GM12878 (cell line): ENCODE measurements at regions of chr3 and their contacts with region 1.

Region 1: DNA sequence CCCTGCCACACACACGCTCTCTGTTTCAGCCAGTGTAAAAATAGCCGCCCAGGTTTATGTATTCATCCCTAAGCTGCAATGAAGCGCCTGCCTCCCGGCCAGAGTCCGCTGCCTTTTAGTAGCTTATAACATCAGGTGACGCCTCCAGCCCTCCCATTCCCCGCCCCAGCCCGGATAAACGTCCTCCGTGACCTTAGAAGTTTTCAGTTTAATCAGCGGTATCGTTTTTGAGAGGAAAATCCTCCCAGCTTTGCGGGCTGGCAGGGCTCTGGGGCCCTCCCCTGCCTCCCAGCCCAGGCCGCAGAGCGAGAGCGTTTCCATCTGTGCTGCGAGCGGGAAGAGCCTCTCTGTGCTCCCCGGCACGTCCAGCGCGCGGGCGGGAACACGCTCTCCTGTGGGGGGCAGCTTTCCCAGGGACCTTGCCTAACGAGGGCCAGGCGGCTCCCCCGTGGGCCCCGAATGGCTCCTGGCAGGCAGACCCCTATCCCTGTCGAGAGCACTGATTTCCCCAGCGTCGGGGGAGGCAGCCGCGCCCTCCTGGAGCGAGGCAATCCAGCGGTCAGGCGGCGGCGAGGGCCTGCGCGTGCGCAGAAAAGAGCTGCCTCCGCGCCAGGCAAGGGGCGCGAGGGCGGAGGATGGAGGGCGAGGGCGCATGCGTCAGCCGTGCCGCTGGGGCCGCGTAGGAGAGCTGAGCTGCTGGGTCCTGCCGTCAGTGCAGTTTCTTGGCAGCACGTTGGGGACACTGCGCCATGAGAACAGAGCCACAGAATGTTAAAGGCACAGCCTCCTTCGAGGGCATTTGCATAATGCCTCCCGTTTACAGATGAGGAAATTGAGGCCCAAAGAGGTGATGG is 71.1 kb downstream of the CCNL1 start:
- DNase-seq: peak; percentile 93
- ATAC-seq: peak; percentile 91
- H3K4me3 ChIP-seq: peak overlapping the region; percentile 52
- H3K27ac ChIP-seq: peak overlapping the region; percentile 97
- H3K4me1 ChIP-seq: peaks cover 53% of the 10 kb centered on the region
- H3K27me3 ChIP-seq: no peaks in the 10 kb centered on the region
- CTCF ChIP-seq: peak in 1 of 3 experiments; percentile 2; a peak in 1 of 6 replicates
- EP300 ChIP-seq: peak; percentile 41 to 58
- POLR2A ChIP-seq: peak; percentile 91
- RAD21 ChIP-seq: no peak

Region 2: GRCh38 chr3:156547637-156548036 is 541.2 kb before region 1 on chr3:
- CTCF ChIA-PET with region 1: interaction called, 3 read pairs
- POLR2A ChIA-PET with region 1: interaction called, 5 read pairs
- RAD21 ChIA-PET with region 1: no interaction called
- SMC1A ChIA-PET with region 1: interaction called, 12 read pairs
- in situ Hi-C with region 1: loop called (anchors 5 kb)
- intact Hi-C with region 1: loop called (anchors 5 kb)
- DNase-seq: no peak
- ATAC-seq: no peak
- H3K4me3 ChIP-seq: no peak overlapping the region
- H3K27ac ChIP-seq: no peak overlapping the region
- H3K4me1 ChIP-seq: no peaks in the 10 kb centered on the region; the same call in 1 of the 2 replicates
- H3K27me3 ChIP-seq: no peaks in the 10 kb centered on the region
- CTCF ChIP-seq: no peak
- EP300 ChIP-seq: no peak
- POLR2A ChIP-seq: no peak
- RAD21 ChIP-seq: no peak

Region 3: GRCh38 chr3:156674046-156674910 is 414.6 kb before region 1 on chr3 and contains the start of gene TIPARP:
- CTCF ChIA-PET with region 1: interaction called, 199 read pairs
- POLR2A ChIA-PET with region 1: interaction called, 6 read pairs
- RAD21 ChIA-PET with region 1: interaction called, 29 read pairs
- SMC1A ChIA-PET with region 1: interaction called, 142 read pairs
- in situ Hi-C with region 1: loop called (anchors 5 kb)
- intact Hi-C with region 1: loop called (anchors 2 kb)
- DNase-seq: peak; percentile 99
- ATAC-seq: peak; percentile 84
- H3K4me3 ChIP-seq: peak within 1 kb of the TSS; percentile 98
- H3K27ac ChIP-seq: peak within 1 kb of the TSS; percentile 73
- H3K4me1 ChIP-seq: no peaks in the 10 kb centered on the region
- H3K27me3 ChIP-seq: no peaks in the 10 kb centered on the region
- CTCF ChIP-seq: peak; percentile 63 to 90 (median 86)
- EP300 ChIP-seq: peak; percentile 65 to 71
- POLR2A ChIP-seq: peak; percentile 100
- RAD21 ChIP-seq: peak; percentile 81
- polyA plus RNA-seq, gene TIPARP: 3.2 to 3.3 TPM

Region 4: GRCh38 chr3:156978481-156978961 is 110.3 kb before region 1 on chr3:
- CTCF ChIA-PET with region 1: no interaction called
- POLR2A ChIA-PET with region 1: interaction called, 9 read pairs
- RAD21 ChIA-PET with region 1: interaction called, 6 read pairs
- SMC1A ChIA-PET with region 1: interaction called, 11 read pairs
- in situ Hi-C with region 1: no loop called
- intact Hi-C with region 1: no loop called
- DNase-seq: peak; percentile 83
- ATAC-seq: peak; percentile 98
- H3K4me3 ChIP-seq: no peak overlapping the region
- H3K27ac ChIP-seq: peak overlapping the region; percentile 93
- H3K4me1 ChIP-seq: peaks cover 20% of the 10 kb centered on the region
- H3K27me3 ChIP-seq: no peaks in the 10 kb centered on the region
- CTCF ChIP-seq: no peak
- EP300 ChIP-seq: peak; percentile 65 to 87
- POLR2A ChIP-seq: no peak
- RAD21 ChIP-seq: 0 out of 2 replicates have a peak, but pooled peaks have one; percentile 11

Region 5: DNA sequence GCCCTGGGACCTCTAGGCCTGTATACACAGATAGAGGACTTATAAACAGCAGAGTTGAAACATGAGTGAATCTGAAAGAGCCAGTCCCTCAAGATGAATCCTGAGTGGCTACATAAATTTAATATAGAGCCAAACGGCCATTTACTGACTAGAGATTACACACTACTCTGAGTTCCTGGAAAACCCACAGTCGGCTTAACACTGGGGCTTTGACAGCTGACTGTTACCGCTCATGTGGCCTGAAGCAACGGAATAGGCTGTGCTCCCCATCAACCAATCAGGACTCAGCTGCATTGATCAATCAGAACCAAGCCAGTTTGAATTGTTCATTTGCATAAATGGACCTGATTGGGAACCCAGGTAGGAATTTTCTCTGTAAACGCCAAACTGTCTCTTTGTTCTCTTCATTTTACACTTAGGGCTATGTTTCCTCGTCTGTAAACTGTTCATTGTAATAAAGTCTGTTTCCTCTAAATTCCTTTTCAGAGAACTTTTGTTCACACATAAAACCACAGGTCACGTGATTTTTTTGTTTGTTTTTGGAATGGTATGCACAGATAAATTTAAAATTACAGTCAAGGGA is 30.6 kb after region 1 on chr3:
- CTCF ChIA-PET with region 1: interaction called, 939 read pairs
- POLR2A ChIA-PET with region 1: interaction called, 3 read pairs
- RAD21 ChIA-PET with region 1: interaction called, 153 read pairs
- SMC1A ChIA-PET with region 1: interaction called, 13 read pairs
- in situ Hi-C with region 1: no loop called
- intact Hi-C with region 1: no loop called
- DNase-seq: no peak
- ATAC-seq: no peak
- H3K4me3 ChIP-seq: no peak overlapping the region
- H3K27ac ChIP-seq: no peak overlapping the region
- H3K4me1 ChIP-seq: no peaks in the 10 kb centered on the region
- H3K27me3 ChIP-seq: no peaks in the 10 kb centered on the region
- CTCF ChIP-seq: no peak
- EP300 ChIP-seq: no peak
- POLR2A ChIP-seq: no peak
- RAD21 ChIP-seq: no peak

Region 6: GRCh38 chr3:157159762-157160657 is 71.2 kb after region 1 on chr3 and contains the start of gene CCNL1:
- CTCF ChIA-PET with region 1: interaction called, 3 read pairs
- POLR2A ChIA-PET with region 1: interaction called, 19 read pairs
- RAD21 ChIA-PET with region 1: interaction called, 11 read pairs
- SMC1A ChIA-PET with region 1: interaction called, 5 read pairs
- in situ Hi-C with region 1: no loop called
- intact Hi-C with region 1: no loop called
- DNase-seq: peak; percentile 82
- ATAC-seq: peak; percentile 88
- H3K4me3 ChIP-seq: peak within 1 kb of the TSS; percentile 72
- H3K27ac ChIP-seq: peak within 1 kb of the TSS; percentile 99
- H3K4me1 ChIP-seq: peaks cover 11% of the 10 kb centered on the region; the same call in 1 of the 2 replicates
- H3K27me3 ChIP-seq: no peaks in the 10 kb centered on the region
- CTCF ChIP-seq: no peak
- EP300 ChIP-seq: peak; percentile 49 to 66; a peak in 2 of 4 replicates
- POLR2A ChIP-seq: peak; percentile 98
- RAD21 ChIP-seq: no peak; the same call in 1 of the 2 replicates
- polyA plus RNA-seq, gene CCNL1: 22.2 to 39.8 TPM